Activated CD4-positive, alpha-beta memory T cell treated with anti-CD3 and anti-CD28 coated beads for 36 hours (primary cell): ENCODE measurements at regions of chr21 and their contacts with region 1.

Region 1: GRCh38 chr21:33360881-33361602 is 36.3 kb downstream of the IFNAR1 start:
- DNase-seq: peak; percentile 94
- H3K4me3 Mint-ChIP-seq: peak overlapping the region; percentile 70
- H3K27ac Mint-ChIP-seq: peak overlapping the region; percentile 75
- H3K4me1 Mint-ChIP-seq: peaks cover 13% of the 10 kb centered on the region
- H3K27me3 Mint-ChIP-seq: no peaks in the 10 kb centered on the region

Region 2: DNA sequence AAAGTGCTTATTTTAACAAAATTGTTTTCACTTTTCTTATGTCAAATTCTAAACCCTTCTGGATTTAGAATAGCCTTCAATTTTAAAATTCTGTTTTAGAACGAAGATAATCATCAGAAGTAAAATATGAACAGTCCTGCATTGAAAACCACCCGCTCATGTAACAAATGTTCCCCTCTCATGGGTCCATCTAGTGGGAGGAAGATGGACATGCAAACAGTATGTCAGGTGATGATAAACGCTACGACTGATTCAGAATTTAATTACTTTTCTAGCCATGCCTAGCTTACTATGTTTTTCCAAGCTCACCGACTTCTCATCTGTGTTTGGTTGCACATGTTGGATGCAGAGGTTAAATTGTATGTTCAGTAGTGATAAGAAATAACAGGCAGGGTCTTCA is 1678.0 kb before region 1 on chr21:
- CTCF ChIA-PET with region 1: no interaction called
- POLR2A ChIA-PET with region 1: no interaction called
- intact Hi-C with region 1: no loop called
- DNase-seq: no peak
- H3K4me3 Mint-ChIP-seq: no peak overlapping the region
- H3K27ac Mint-ChIP-seq: no peak overlapping the region
- H3K4me1 Mint-ChIP-seq: no peaks in the 10 kb centered on the region
- H3K27me3 Mint-ChIP-seq: no peaks in the 10 kb centered on the region

Region 3: GRCh38 chr21:32940079-32941014 is 420.7 kb before region 1 on chr21:
- CTCF ChIA-PET with region 1: interaction called, 10 read pairs
- POLR2A ChIA-PET with region 1: no interaction called
- intact Hi-C with region 1: no loop called
- DNase-seq: peak; percentile 44
- H3K4me3 Mint-ChIP-seq: no peak overlapping the region
- H3K27ac Mint-ChIP-seq: no peak overlapping the region
- H3K4me1 Mint-ChIP-seq: no peaks in the 10 kb centered on the region
- H3K27me3 Mint-ChIP-seq: peaks cover 3% of the 10 kb centered on the region

Region 4: DNA sequence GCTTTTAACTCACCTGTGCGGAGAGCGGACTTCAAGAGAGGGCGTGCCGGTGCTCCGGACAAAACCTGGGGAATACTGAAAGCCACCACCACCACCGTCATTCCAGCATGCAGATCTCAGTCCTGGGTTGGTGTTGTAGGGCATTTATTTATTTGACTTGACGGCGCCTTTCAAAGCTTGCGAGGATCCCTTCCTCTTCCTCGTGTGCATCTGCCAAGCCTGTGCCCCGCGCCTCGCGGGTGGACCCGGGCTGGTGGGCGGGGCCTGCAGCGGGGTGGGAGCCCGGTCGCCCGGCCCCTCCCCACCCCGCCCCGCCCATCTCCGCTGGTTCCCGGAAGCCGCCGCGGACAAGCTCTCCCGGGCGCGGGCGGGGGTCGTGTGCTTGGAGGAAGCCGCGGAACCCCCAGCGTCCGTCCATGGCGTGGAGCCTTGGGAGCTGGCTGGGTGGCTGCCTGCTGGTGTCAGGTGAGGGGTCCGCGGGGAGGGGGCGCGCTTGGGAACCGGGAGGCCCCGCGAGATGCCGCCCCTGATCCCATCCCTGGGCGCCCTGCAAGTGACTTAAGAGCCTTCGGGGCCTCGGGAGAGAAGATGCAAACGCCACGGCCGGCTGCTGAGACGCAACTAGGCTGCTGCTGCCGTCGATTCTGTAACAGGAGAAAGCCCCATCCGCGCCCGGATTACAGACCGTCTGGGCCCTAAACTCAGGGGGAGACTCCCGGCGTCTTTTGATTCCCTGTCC is 94.8 kb before region 1 on chr21 and contains the start of gene IL10RB:
- CTCF ChIA-PET with region 1: interaction called, 6 read pairs
- POLR2A ChIA-PET with region 1: interaction called, 3 read pairs
- intact Hi-C with region 1: loop called (anchors 5 kb)
- DNase-seq: peak; percentile 78
- H3K4me3 Mint-ChIP-seq: peak within 1 kb of the TSS; percentile 99
- H3K27ac Mint-ChIP-seq: peak within 1 kb of the TSS; percentile 97
- H3K4me1 Mint-ChIP-seq: peaks cover 55% of the 10 kb centered on the region
- H3K27me3 Mint-ChIP-seq: no peaks in the 10 kb centered on the region
- total RNA-seq, gene IL10RB: 31.3 to 32.5 TPM

Region 5: GRCh38 chr21:33348706-33349105 is 12.3 kb before region 1 on chr21:
- CTCF ChIA-PET with region 1: interaction called, 38 read pairs
- POLR2A ChIA-PET with region 1: no interaction called
- intact Hi-C with region 1: no loop called
- DNase-seq: no peak
- H3K4me3 Mint-ChIP-seq: no peak overlapping the region
- H3K27ac Mint-ChIP-seq: no peak overlapping the region
- H3K4me1 Mint-ChIP-seq: peaks cover 3% of the 10 kb centered on the region
- H3K27me3 Mint-ChIP-seq: no peaks in the 10 kb centered on the region

Region 6: GRCh38 chr21:33386222-33386784 is 25.3 kb after region 1 on chr21:
- CTCF ChIA-PET with region 1: interaction called, 22 read pairs
- POLR2A ChIA-PET with region 1: interaction called, 4 read pairs
- intact Hi-C with region 1: no loop called
- DNase-seq: no peak
- H3K4me3 Mint-ChIP-seq: no peak overlapping the region
- H3K27ac Mint-ChIP-seq: no peak overlapping the region
- H3K4me1 Mint-ChIP-seq: peaks cover 41% of the 10 kb centered on the region
- H3K27me3 Mint-ChIP-seq: peaks cover 16% of the 10 kb centered on the region

Region 7: DNA sequence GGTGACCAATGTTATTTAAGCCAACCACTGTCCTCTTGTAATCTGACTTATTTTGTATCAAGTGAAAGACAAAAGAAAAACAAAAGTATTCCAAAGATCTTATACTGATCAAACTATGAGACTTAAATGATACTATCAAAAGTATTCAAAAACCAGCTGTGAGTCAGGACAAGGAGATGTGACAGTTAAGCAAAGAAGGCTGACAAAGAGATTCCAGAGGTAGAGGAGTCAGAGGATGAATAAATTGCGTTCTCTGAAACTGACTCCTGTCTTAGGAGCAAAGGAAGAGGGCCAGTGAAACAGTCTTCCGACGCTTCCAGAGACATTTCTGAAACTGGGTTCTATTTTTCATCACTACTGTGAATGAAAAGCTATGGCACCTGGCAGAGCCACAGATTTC is 97.8 kb after region 1 on chr21:
- CTCF ChIA-PET with region 1: interaction called, 10 read pairs
- POLR2A ChIA-PET with region 1: no interaction called
- intact Hi-C with region 1: no loop called
- DNase-seq: no peak
- H3K4me3 Mint-ChIP-seq: no peak overlapping the region
- H3K27ac Mint-ChIP-seq: no peak overlapping the region
- H3K4me1 Mint-ChIP-seq: no peaks in the 10 kb centered on the region
- H3K27me3 Mint-ChIP-seq: no peaks in the 10 kb centered on the region